Naive thymus-derived CD8-positive, alpha-beta T cell (primary cell): ENCODE measurements at regions of chr11 and their contacts with region 1.

Region 1: DNA sequence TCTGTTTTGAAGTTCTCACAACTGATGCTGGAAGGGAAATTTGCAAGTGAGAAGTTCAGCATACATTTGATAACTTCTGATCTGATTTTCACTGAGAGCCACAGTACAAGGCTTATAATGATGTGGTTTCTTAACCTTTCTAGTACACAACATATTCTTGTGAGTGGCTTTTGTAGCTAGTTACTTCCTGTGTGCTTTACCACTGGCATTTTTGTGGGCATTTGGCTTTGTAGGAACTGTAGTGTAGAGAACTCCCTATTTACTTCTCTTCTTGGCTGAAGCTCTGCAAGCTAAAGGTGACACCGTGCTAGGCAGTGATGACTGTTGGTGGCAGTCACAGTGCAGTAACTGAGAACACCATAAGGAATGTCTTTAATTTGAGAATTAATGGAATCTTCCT is 14.9 kb downstream of the USP47 start:
- DNase-seq: peak in 6 of 10 donors; percentile 12 to 72 (median 42)
- ATAC-seq: peak; percentile 92 to 96
- H3K4me3 Mint-ChIP-seq: peak overlapping the region; percentile 22 to 80 (median 59)
- H3K27ac Mint-ChIP-seq: peak overlapping the region in 8 of 10 donors; percentile 25 to 90 (median 73)
- H3K4me1 Mint-ChIP-seq: peaks cover 28 to 86% (median 72%) of the 10 kb centered on the region in 4 donors
- H3K27me3 Mint-ChIP-seq: no peaks in the 10 kb centered on the region

Region 2: DNA sequence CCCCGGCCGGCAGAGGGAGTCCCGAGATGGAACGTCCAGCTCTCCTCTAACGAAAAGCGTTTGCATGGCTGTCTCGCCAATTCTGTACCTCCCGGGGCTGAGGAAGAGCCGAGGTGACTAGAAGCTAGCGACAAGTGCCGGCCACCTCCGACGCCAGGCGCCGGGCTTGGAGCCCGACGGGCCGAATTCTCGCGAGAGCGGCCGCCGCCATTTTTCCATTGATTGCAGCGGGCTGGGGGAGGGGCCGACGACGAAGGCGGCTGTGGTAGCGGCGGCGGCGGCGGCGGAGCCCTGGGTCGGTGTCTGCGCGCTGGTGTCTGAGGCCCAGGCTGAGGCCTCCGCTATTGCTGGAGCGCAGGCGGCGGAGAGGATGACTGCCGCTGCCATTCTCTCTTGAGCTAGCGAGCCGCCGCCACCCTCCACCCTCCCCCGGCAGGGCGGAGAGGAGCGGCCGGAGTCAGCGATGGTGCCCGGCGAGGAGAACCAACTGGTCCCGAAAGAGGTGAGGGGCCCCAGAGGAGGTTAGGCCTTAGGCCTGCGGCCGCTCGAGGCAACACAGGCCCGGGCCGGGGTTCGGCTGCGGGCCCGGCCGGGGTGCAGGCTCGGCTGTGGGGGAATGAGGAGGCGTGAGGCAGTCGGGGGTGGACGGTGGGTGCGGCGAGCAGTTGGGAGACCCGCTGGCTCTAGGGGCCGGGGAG is 14.8 kb before region 1 on chr11 and contains the start of gene USP47:
- POLR2A ChIA-PET with region 1: interaction called, 47 read pairs
- DNase-seq: peak; percentile 90 to 97 (median 96)
- ATAC-seq: peak; percentile 83 to 84
- H3K4me3 Mint-ChIP-seq: no peak within 1 kb of the TSS
- H3K27ac Mint-ChIP-seq: no peak within 1 kb of the TSS
- H3K4me1 Mint-ChIP-seq: peaks cover 3 to 25% (median 9%) of the 10 kb centered on the region in 4 donors
- H3K27me3 Mint-ChIP-seq: peaks cover 4 to 13% (median 7%) of the 10 kb centered on the region in 5 donors
- polyA plus RNA-seq, gene USP47: 38.2 to 54.3 (median 40.1) TPM